ENCODE measurements at regions of chr1 and their contacts with region 1.

Region 1: DNA sequence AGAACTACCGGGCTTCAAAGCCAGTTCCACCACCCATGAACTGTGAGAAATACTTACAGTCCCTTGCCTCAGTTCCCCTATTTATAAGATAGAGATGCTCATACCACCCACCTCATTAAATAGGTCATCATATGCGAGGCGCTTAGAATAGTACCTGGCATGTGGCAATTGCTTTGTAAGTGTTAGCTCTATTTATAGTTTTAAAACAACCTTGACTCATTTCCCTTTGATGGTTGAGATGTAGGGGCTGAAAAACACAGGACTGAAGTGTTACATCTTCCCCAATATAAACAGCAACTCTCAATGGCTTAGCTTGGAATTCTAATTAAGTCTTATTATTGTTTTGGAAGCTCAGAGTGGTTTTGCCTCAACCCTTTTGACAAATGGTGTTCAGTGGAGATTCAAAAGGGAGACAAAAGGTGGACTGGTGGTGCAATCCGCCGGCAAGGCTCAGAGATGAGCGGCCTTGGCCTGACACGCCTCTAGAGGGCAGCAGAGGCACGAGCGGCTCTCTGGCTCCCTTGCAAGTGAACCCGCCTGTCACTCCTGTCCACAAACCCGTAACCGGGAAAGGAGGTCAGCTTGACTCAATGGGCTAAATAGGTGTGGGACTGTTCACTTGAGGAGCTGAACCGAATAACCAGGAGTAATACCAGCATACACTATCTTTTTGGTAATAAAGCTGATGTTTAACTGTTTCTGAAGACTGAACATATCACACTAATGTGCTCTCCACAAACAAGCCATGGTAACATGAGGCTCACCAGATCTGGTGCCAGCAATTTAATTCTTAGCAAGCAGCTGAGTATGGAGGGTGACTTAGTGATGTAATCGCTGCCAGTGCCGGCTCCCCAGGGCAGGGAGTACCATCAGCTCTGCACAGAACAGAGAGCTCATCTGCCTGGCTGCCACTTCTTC is 19.5 kb upstream of the SMYD2 start:
- DNase-seq: peak; percentile 86
- H3K4me3 Mint-ChIP-seq: no peak overlapping the region
- H3K27ac Mint-ChIP-seq: no peak overlapping the region
- H3K4me1 Mint-ChIP-seq: peaks cover 14% of the 10 kb centered on the region
- H3K27me3 Mint-ChIP-seq: peaks cover 57% of the 10 kb centered on the region

Region 2: DNA sequence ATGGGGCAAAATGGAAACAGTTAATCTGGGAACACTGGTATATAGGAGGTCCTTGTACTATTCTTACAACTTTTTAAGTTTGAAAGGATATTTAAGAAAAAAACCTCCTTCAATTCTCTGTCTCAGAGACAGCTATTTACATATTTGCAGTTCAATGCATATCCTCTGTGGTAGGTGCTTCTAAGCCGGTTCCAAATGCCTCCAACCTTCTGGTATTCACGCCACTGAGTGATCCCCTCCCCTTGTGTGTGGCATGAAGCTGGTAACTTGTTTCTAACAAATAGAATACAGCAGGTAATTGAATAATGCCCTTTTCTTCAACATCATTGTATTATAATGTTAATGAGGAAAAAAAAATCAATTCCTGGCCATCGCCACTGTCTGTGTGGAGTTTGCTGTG is 182.5 kb before region 1 on chr1:
- CTCF ChIA-PET with region 1: no interaction called
- POLR2A ChIA-PET with region 1: no interaction called
- DNase-seq: no peak
- H3K4me3 Mint-ChIP-seq: no peak overlapping the region
- H3K27ac Mint-ChIP-seq: no peak overlapping the region
- H3K4me1 Mint-ChIP-seq: no peaks in the 10 kb centered on the region
- H3K27me3 Mint-ChIP-seq: no peaks in the 10 kb centered on the region

Region 3: GRCh38 chr1:214192825-214193643 is 68.4 kb before region 1 on chr1:
- CTCF ChIA-PET with region 1: no interaction called
- POLR2A ChIA-PET with region 1: no interaction called
- DNase-seq: no peak
- H3K4me3 Mint-ChIP-seq: no peak overlapping the region
- H3K27ac Mint-ChIP-seq: no peak overlapping the region
- H3K4me1 Mint-ChIP-seq: no peaks in the 10 kb centered on the region
- H3K27me3 Mint-ChIP-seq: peaks cover 33% of the 10 kb centered on the region

Region 4: DNA sequence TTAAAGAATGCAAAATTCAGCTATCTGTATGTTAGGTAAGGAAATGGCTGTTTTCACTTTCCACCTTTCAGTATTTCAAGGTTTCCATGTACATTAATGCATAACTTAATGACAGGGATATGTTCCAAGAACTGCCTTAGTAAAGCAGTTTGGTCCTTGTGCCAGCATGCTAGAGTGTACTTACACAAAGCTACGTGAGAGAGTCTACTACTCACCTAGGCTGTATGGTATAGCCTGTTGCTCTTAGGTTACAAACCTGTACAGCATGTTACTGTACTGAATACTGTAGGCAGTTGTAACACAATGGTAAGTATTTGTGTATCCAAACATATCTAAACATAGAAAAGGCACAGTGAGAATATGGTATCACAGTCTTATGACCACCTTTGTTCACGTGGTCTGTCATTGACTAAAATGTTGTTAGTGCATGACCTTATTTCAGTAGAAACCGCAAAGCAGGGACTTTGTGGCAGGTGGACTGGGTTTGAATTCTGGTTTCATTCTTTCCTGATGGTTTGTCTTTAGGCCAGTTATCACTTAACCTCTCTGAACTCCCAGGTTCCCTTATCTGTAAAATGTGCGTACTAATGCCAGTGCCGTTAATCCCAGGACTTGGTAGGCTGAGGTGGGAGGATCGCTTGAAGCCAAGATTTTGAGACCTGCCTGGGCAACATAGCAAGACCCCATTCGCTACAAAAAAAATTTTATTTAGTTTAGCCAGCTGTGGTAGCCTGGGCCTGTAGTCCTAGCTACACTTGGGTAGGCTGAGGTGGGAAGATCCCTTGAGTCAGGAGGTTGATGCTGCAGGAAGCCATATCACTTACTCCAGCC is 24.4 kb after region 1 on chr1:
- CTCF ChIA-PET with region 1: interaction called, 11 read pairs
- POLR2A ChIA-PET with region 1: no interaction called
- DNase-seq: no peak
- H3K4me3 Mint-ChIP-seq: no peak overlapping the region
- H3K27ac Mint-ChIP-seq: no peak overlapping the region
- H3K4me1 Mint-ChIP-seq: peaks cover 38% of the 10 kb centered on the region
- H3K27me3 Mint-ChIP-seq: no peaks in the 10 kb centered on the region

Region 5: GRCh38 chr1:214316593-214316992 is 55.1 kb after region 1 on chr1:
- CTCF ChIA-PET with region 1: interaction called, 14 read pairs
- POLR2A ChIA-PET with region 1: no interaction called
- DNase-seq: no peak
- H3K4me3 Mint-ChIP-seq: no peak overlapping the region
- H3K27ac Mint-ChIP-seq: no peak overlapping the region
- H3K4me1 Mint-ChIP-seq: peaks cover 10% of the 10 kb centered on the region
- H3K27me3 Mint-ChIP-seq: no peaks in the 10 kb centered on the region

Region 6: DNA sequence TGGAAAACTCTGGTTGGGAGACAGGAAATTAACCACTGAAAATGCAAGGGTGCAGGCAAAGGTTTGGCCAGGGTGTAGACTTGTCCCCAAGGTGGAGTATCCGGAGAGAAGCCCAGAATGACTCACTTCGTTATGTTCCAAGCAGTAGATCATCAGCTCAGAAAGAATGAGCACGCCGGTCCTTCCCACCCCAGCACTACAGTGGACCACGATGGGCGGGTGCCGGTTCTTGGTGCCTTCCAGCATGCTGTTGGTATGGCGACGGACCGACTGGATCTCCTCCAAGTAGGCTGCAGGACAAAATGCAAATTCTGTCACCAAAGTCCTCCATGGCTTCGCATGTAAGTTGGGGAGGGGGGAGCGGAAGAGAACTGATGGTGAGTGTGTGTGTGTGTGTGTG is 102.9 kb after region 1 on chr1:
- CTCF ChIA-PET with region 1: no interaction called
- POLR2A ChIA-PET with region 1: no interaction called
- DNase-seq: no peak
- H3K4me3 Mint-ChIP-seq: no peak overlapping the region
- H3K27ac Mint-ChIP-seq: no peak overlapping the region
- H3K4me1 Mint-ChIP-seq: no peaks in the 10 kb centered on the region
- H3K27me3 Mint-ChIP-seq: peaks cover 6% of the 10 kb centered on the region

Region 7: GRCh38 chr1:214438075-214438474 is 176.6 kb after region 1 on chr1:
- CTCF ChIA-PET with region 1: no interaction called
- POLR2A ChIA-PET with region 1: no interaction called
- DNase-seq: no peak
- H3K4me3 Mint-ChIP-seq: no peak overlapping the region
- H3K27ac Mint-ChIP-seq: peak overlapping the region; percentile 87
- H3K4me1 Mint-ChIP-seq: peaks cover 45% of the 10 kb centered on the region
- H3K27me3 Mint-ChIP-seq: no peaks in the 10 kb centered on the region

Measured in activated CD4-positive, alpha-beta T cell treated with anti-CD3 and anti-CD28 coated beads, Interleukin-2, amount 10 ng/mL, durations not matched to agents 7 days and 5 days (primary cell).